Transverse colon (tissue), 4 donors: ENCODE measurements at regions of chr7 and their contacts with region 1.

Region 1: DNA sequence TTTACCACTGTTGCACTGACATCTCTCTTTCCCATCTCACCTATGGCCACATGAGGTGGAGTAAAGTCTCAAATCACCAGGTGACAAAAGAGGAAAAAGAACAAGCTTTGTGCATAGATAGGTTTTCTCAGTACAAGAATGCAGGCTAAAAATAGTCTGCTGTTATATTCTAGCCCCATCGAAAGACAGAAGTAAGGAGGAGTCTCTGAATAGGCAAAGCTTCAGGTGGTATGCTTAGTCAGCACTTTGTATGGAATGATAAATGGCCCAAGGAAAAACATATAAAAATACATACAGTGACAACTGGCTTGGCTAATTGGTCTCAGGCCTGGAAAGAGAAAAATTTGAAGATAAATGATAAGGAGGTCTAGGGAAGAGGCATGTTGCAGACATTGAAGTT is 39.6 kb upstream of the KCND2 start:
- DNase-seq: no peak
- H3K4me3 ChIP-seq: no peak overlapping the region
- H3K27ac ChIP-seq: no peak overlapping the region
- H3K4me1 ChIP-seq: no peaks in the 10 kb centered on the region
- H3K27me3 ChIP-seq: no peaks in the 10 kb centered on the region
- CTCF ChIP-seq: no peak
- EP300 ChIP-seq: no peak
- POLR2A ChIP-seq: no peak

Region 2: GRCh38 chr7:118777308-118777707 is 1456.0 kb before region 1 on chr7:
- in situ Hi-C with region 1: no loop called
- intact Hi-C with region 1: no loop called
- DNase-seq: no peak
- H3K4me3 ChIP-seq: no peak overlapping the region
- H3K27ac ChIP-seq: no peak overlapping the region
- H3K4me1 ChIP-seq: no peaks in the 10 kb centered on the region
- H3K27me3 ChIP-seq: no peaks in the 10 kb centered on the region
- CTCF ChIP-seq: no peak
- EP300 ChIP-seq: no peak
- POLR2A ChIP-seq: no peak

Region 3: GRCh38 chr7:120170834-120171233 is 62.5 kb before region 1 on chr7:
- in situ Hi-C with region 1: loop called in 1 of 4 experiments (anchors 10 kb)
- intact Hi-C with region 1: no loop called
- DNase-seq: no peak
- H3K4me3 ChIP-seq: no peak overlapping the region
- H3K27ac ChIP-seq: no peak overlapping the region
- H3K4me1 ChIP-seq: no peaks in the 10 kb centered on the region
- H3K27me3 ChIP-seq: no peaks in the 10 kb centered on the region
- CTCF ChIP-seq: no peak
- EP300 ChIP-seq: no peak
- POLR2A ChIP-seq: no peak